CD8-positive, alpha-beta memory T cell (primary cell): ENCODE measurements at regions of chr5 and their contacts with region 1.

Region 1: GRCh38 chr5:141590127-141590526 is 28.7 kb downstream of the DIAPH1 start:
- DNase-seq: no peak
- H3K4me3 ChIP-seq: no peak overlapping the region
- H3K4me3 Mint-ChIP-seq: no peak overlapping the region
- H3K27ac ChIP-seq: no peak overlapping the region
- H3K27ac Mint-ChIP-seq: peak overlapping the region in 4 of 8 donors; percentile 27 to 72 (median 57)
- H3K4me1 ChIP-seq: peaks cover 20% of the 10 kb centered on the region
- H3K4me1 Mint-ChIP-seq: peaks cover 48 to 70% (median 70%) of the 10 kb centered on the region in 3 donors
- H3K27me3 ChIP-seq: no peaks in the 10 kb centered on the region
- H3K27me3 Mint-ChIP-seq: no peaks in the 10 kb centered on the region

Region 2: GRCh38 chr5:141605523-141606277 is 15.6 kb after region 1 on chr5:
- CTCF ChIA-PET with region 1: interaction called, 55 read pairs
- POLR2A ChIA-PET with region 1: interaction called, 7 read pairs
- DNase-seq: peak; percentile 54 to 88 (median 85)
- H3K4me3 ChIP-seq: peak overlapping the region; percentile 33
- H3K4me3 Mint-ChIP-seq: peak overlapping the region; percentile 66 to 82 (median 77)
- H3K27ac ChIP-seq: peak overlapping the region; percentile 67
- H3K27ac Mint-ChIP-seq: peak overlapping the region; percentile 77 to 99 (median 92)
- H3K4me1 ChIP-seq: peaks cover 90% of the 10 kb centered on the region
- H3K4me1 Mint-ChIP-seq: peaks cover 89 to 96% (median 96%) of the 10 kb centered on the region in 3 donors
- H3K27me3 ChIP-seq: no peaks in the 10 kb centered on the region
- H3K27me3 Mint-ChIP-seq: no peaks in the 10 kb centered on the region

Region 3: DNA sequence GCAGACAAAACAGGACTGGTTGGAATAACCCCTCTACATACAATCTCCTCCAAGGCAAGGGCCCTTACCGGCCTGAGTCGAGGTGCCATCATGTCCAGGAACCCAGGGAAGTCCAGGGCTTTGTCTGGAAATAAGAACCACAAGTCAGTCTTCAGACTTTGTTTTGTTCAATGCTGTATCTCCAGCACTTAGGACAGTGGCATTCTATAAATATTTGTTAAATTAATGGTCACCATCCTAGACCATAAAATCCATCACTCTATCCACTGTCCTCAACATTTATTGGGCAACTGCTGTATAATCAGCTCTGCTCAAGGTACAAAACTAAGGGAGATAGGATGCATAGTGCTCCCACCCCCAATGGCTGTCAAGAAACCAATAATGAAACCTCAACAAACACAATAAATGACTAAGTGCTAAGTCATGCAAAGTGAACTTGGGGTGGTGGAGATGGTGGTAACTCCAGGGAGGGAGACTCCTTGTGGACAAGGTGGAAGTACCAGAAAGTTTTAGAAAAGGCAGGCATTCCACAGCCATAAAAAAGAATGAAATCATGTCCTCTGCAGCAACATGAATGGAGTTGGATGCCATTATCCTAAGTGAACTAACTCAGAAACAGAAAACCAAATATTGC is 51.6 kb after region 1 on chr5:
- CTCF ChIA-PET with region 1: interaction called, 37 read pairs
- POLR2A ChIA-PET with region 1: interaction called, 13 read pairs
- DNase-seq: no peak
- H3K4me3 ChIP-seq: no peak overlapping the region
- H3K4me3 Mint-ChIP-seq: peak overlapping the region in 1 of 7 donors; percentile 15
- H3K27ac ChIP-seq: no peak overlapping the region
- H3K27ac Mint-ChIP-seq: peak overlapping the region in 7 of 8 donors; percentile 2 to 89 (median 19)
- H3K4me1 ChIP-seq: peaks cover 10% of the 10 kb centered on the region
- H3K4me1 Mint-ChIP-seq: peaks cover 5 to 26% (median 9%) of the 10 kb centered on the region in 3 donors
- H3K27me3 ChIP-seq: no peaks in the 10 kb centered on the region
- H3K27me3 Mint-ChIP-seq: no peaks in the 10 kb centered on the region